Calu3 (cell line): ENCODE measurements at regions of chr6 and their contacts with region 1.

Region 1: DNA sequence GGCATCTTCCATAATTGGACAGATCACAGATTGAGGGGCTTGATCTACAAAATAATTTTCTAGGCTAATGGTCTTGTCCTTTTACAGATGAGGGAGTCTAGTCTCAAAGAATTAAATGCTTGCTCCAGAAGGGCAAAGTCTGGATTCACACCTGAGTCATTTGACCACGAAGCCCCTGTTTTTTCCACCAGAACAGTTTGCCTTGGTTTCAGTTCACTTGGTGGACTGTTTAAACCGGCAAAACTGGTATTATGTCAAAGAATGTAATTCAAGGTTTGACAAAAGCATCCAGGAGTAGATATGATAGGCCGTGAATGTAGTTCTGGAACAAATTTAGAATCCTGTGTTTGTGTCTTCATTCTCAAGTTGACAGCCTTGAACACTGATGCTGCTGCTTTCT is 3.3 kb downstream of the MYO6 start:
- DNase-seq: peak; percentile 51
- H3K4me3 Mint-ChIP-seq: peak overlapping the region; percentile 99
- H3K27ac Mint-ChIP-seq: peak overlapping the region; percentile 98
- H3K4me1 Mint-ChIP-seq: peaks cover 9% of the 10 kb centered on the region
- H3K27me3 Mint-ChIP-seq: no peaks in the 10 kb centered on the region
- CTCF ChIP-seq: no peak

Region 2: GRCh38 chr6:75601304-75602245 is 150.8 kb before region 1 on chr6 and contains the start of gene SENP6:
- CTCF ChIA-PET with region 1: no interaction called
- intact Hi-C with region 1: loop called (anchors 5 kb)
- DNase-seq: peak; percentile 81
- H3K4me3 Mint-ChIP-seq: peak within 1 kb of the TSS; percentile 81
- H3K27ac Mint-ChIP-seq: peak within 1 kb of the TSS; percentile 81
- H3K4me1 Mint-ChIP-seq: peaks cover 15% of the 10 kb centered on the region
- H3K27me3 Mint-ChIP-seq: no peaks in the 10 kb centered on the region
- CTCF ChIP-seq: no peak
- total RNA-seq, gene SENP6: 76.2 and 93.6 TPM in 2 replicates

Region 3: DNA sequence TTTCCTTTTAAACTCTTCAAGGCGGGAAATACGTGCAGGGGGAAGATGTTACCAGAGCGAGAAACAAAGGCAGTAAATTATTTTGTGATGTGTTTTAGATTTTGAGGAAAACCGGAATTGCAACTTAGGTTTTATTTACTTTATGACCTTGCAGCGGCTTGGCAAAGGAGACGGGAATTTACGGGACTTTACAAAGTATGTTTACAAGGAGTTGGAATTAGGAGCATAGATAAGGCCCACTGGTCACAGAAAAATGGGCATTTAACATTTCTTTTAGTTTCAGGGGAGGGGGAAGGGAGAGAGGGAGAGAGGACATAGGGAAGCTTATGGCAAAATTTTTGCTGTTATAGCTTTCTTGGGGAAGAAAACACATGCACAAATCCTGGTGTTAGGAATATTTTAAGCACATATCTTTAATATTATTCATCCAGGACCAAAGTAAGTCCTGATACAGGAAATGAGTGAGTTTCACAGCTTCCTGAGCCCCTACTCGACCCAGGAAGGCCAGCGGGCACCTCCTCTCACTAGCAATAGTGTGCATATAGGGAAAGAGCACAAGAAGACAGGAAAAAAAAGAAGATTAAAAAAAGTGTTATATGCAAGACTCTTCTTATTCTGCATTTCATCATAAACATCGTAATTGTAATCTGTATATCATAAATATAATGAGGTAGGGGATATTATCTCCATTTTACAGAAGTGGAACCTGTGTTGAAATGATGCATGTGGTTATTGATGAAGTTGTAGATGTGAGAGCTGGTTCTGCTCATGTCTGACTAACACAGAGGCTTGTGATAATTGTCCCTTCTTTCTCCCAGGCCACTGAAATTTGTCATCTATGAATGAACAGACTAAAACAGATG is 97.6 kb after region 1 on chr6:
- CTCF ChIA-PET with region 1: no interaction called
- intact Hi-C with region 1: loop called (anchors 2 kb)
- DNase-seq: peak; percentile 9
- H3K4me3 Mint-ChIP-seq: peak overlapping the region; percentile 24
- H3K27ac Mint-ChIP-seq: peak overlapping the region; percentile 40
- H3K4me1 Mint-ChIP-seq: peaks cover 33% of the 10 kb centered on the region
- H3K27me3 Mint-ChIP-seq: no peaks in the 10 kb centered on the region
- CTCF ChIP-seq: no peak

Region 4: DNA sequence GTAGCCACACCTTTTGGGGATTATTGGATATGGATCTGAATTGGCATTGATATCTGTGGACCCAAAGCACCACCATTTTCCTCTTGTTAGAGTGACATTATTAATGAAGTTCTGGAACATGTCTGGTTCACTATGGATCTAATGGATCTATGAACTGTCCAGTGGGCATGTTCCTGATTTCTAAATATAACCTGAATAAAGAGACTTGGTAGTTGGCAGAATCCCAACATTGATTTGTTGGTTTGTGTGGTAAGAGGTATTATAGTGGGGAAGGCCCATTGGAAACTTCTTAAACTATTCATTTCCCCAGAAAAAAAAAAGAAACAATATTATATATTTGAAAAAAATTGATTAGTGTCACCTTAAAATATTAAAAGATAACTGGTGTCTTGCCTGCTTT is 1398.4 kb after region 1 on chr6:
- CTCF ChIA-PET with region 1: no interaction called
- intact Hi-C with region 1: no loop called
- DNase-seq: no peak
- H3K4me3 Mint-ChIP-seq: no peak overlapping the region
- H3K27ac Mint-ChIP-seq: no peak overlapping the region
- H3K4me1 Mint-ChIP-seq: no peaks in the 10 kb centered on the region
- H3K27me3 Mint-ChIP-seq: no peaks in the 10 kb centered on the region
- CTCF ChIP-seq: no peak